ENCODE measurements at regions of chr2 and their contacts with region 1.

Region 1: DNA sequence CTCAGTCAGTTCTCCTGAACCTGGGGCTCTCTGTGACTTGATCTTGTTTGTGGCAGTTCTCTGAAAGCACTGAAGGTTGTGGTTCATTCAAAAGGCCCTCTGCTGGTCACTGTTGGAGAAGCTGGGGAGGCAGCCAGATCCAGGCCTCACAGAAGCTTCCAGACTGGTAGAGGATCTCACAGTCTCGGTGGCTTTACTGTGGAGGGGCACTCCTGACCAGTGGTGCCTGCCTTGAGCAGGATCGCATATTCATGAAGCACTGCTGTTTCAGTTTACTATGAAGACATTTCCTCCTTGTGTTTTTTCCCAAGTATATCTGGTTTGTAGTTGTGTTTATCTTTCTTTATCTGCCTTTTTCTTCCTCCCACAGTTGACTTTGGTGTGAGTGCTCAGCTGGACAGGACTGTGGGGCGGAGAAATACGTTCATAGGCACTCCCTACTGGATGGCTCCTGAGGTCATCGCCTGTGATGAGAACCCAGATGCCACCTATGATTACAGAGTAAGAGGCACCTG is 133.9 kb downstream of the MAP4K4 start:
- DNase-seq: no peak
- ATAC-seq: peak; percentile 91
- H3K4me3 ChIP-seq: no peak overlapping the region
- H3K27ac ChIP-seq: no peak overlapping the region
- H3K4me1 ChIP-seq: peaks cover 6% of the 10 kb centered on the region
- H3K27me3 ChIP-seq: no peaks in the 10 kb centered on the region
- CTCF ChIP-seq: peak; percentile 72 to 79 (median 75)
- EP300 ChIP-seq: no peak
- POLR2A ChIP-seq: no peak
- RAD21 ChIP-seq: peak; percentile 68

Region 2: DNA sequence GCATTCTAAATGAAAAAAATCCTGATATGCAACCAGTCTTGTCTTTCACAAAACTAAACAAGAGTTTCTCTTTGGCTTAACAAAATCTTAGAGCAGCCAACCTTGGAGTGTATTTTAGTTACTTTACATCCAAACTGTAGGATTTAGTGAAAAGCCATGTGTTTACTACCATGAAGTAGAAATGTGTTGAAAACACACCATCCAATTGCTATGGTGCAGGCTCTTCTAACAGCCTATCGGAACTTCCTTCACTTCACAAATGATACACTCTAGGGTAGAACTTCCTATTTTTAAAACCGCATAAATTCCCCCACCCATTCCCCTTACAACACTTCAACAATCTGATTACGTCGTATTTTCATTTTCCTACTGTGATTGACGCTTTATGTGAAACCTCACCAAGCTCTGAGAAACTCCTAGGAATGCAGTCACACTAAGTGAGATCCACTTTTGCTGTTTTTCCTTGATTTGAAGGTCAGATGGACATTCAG is 208.3 kb before region 1 on chr2:
- CTCF ChIA-PET with region 1: interaction called, 6 read pairs
- POLR2A ChIA-PET with region 1: no interaction called
- RAD21 ChIA-PET with region 1: interaction called, 4 read pairs
- SMC1A ChIA-PET with region 1: interaction called, 4 read pairs
- in situ Hi-C with region 1: no loop called
- intact Hi-C with region 1: loop called (anchors 10 kb)
- DNase-seq: peak; percentile 50
- ATAC-seq: peak; percentile 86
- H3K4me3 ChIP-seq: no peak overlapping the region; the same call in 1 of the 2 replicates
- H3K27ac ChIP-seq: peak overlapping the region; percentile 41; the same call in 1 of the 2 replicates
- H3K4me1 ChIP-seq: peaks cover 22% of the 10 kb centered on the region
- H3K27me3 ChIP-seq: no peaks in the 10 kb centered on the region
- CTCF ChIP-seq: no peak
- EP300 ChIP-seq: peak; percentile 74 to 84; a peak in 3 of 4 replicates
- POLR2A ChIP-seq: no peak
- RAD21 ChIP-seq: no peak

Region 3: GRCh38 chr2:101725515-101726192 is 105.8 kb before region 1 on chr2:
- CTCF ChIA-PET with region 1: interaction called, 12 read pairs
- POLR2A ChIA-PET with region 1: no interaction called
- RAD21 ChIA-PET with region 1: interaction called, 5 read pairs
- SMC1A ChIA-PET with region 1: interaction called, 6 read pairs
- in situ Hi-C with region 1: no loop called
- intact Hi-C with region 1: no loop called
- DNase-seq: no peak
- ATAC-seq: 0 out of 3 replicates have a peak, but pooled peaks have one; percentile 15
- H3K4me3 ChIP-seq: no peak overlapping the region
- H3K27ac ChIP-seq: no peak overlapping the region
- H3K4me1 ChIP-seq: no peaks in the 10 kb centered on the region
- H3K27me3 ChIP-seq: no peaks in the 10 kb centered on the region; a peak in 1 of 4 replicates
- CTCF ChIP-seq: peak; percentile 21 to 46 (median 28); a peak in 5 of 6 replicates
- EP300 ChIP-seq: no peak
- POLR2A ChIP-seq: no peak
- RAD21 ChIP-seq: peak; percentile 58

Region 4: DNA sequence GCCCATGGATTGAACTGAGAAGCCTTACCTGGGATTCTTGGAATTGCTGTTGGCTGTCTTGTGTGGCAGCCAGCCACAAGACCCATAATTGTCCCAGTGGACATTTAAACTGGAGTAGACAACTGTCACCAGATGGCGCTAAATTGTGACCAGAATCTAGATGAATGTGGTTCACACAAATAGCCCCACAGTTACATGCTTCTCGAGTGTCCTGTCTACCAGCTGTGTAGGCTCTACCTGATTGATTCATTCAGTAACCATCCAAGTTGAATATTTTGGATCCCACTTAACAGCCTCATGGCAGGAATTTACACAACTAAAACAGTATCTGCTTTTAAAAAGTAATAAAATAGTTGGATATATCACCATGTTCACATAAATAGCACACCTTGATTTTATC is 60.7 kb before region 1 on chr2:
- CTCF ChIA-PET with region 1: interaction called, 204 read pairs
- POLR2A ChIA-PET with region 1: interaction called, 4 read pairs
- RAD21 ChIA-PET with region 1: interaction called, 31 read pairs
- SMC1A ChIA-PET with region 1: interaction called, 102 read pairs
- in situ Hi-C with region 1: no loop called
- intact Hi-C with region 1: loop called (anchors 2 kb)
- DNase-seq: peak; percentile 30
- ATAC-seq: peak; percentile 95
- H3K4me3 ChIP-seq: no peak overlapping the region
- H3K27ac ChIP-seq: no peak overlapping the region
- H3K4me1 ChIP-seq: no peaks in the 10 kb centered on the region
- H3K27me3 ChIP-seq: no peaks in the 10 kb centered on the region
- CTCF ChIP-seq: peak; percentile 54 to 70 (median 56); a peak in 5 of 6 replicates
- EP300 ChIP-seq: no peak
- POLR2A ChIP-seq: no peak
- RAD21 ChIP-seq: peak; percentile 52

Region 5: GRCh38 chr2:101841679-101842327 is 10.4 kb after region 1 on chr2:
- CTCF ChIA-PET with region 1: interaction called, 15 read pairs
- POLR2A ChIA-PET with region 1: no interaction called
- RAD21 ChIA-PET with region 1: interaction called, 3 read pairs
- SMC1A ChIA-PET with region 1: interaction called, 4 read pairs
- in situ Hi-C with region 1: no loop called
- intact Hi-C with region 1: no loop called
- DNase-seq: no peak
- ATAC-seq: no peak
- H3K4me3 ChIP-seq: no peak overlapping the region
- H3K27ac ChIP-seq: no peak overlapping the region
- H3K4me1 ChIP-seq: no peaks in the 10 kb centered on the region
- H3K27me3 ChIP-seq: no peaks in the 10 kb centered on the region
- CTCF ChIP-seq: no peak
- EP300 ChIP-seq: no peak
- POLR2A ChIP-seq: no peak
- RAD21 ChIP-seq: no peak

Measured in GM12878 (cell line).